PC-3 (cell line): ENCODE measurements at regions of chr3 and their contacts with region 1.

Region 1: DNA sequence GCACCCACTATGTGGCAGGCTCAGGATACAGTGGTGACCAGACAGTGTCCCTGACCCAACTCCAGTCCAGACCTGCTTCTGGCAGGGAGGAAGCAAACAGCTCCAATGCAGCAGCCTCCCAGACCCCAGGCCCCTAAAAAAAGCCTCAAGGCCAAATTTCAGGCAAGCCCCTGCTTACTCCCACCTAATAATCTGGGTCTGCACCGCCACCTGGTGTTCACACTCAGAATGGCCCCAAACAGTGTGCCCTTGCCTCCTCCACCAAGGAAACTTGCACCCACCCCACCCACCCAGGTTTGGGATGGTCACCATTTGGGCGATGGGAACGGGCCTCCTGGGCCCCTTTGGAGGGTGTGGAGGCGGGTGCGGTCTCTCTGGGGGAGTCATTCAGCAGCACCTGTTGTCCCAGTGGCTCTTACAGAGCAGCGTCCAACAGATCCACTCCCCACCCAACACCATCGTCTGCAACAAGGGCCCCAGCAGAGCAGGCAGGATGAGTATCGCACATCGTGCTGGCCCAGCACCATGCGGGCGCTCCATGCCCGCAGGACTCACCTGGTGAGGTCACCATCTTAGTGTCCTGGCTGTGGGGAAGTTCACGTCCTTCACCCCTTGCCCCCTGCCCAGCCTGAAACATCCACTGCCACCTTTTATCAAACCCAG is 17.3 kb downstream of the C3orf18 start:
- DNase-seq: peak; percentile 71
- ATAC-seq: peak; percentile 64
- H3K4me3 ChIP-seq: no peak overlapping the region
- H3K27ac ChIP-seq: no peak overlapping the region
- H3K4me1 ChIP-seq: no peaks in the 10 kb centered on the region
- H3K27me3 ChIP-seq: no peaks in the 10 kb centered on the region
- CTCF ChIP-seq: peak; percentile 63

Region 2: GRCh38 chr3:50205414-50206276 is 344.6 kb before region 1 on chr3:
- CTCF ChIA-PET with region 1: no interaction called
- POLR2A ChIA-PET with region 1: no interaction called
- intact Hi-C with region 1: no loop called
- DNase-seq: no peak
- ATAC-seq: peak; percentile 7; the same call in 1 of the 2 replicates
- H3K4me3 ChIP-seq: peak overlapping the region; percentile 55
- H3K27ac ChIP-seq: no peak overlapping the region
- H3K4me1 ChIP-seq: no peaks in the 10 kb centered on the region
- H3K27me3 ChIP-seq: 0 out of 2 replicates have a peak, but pooled peaks cover 10% of the 10 kb centered on the region
- CTCF ChIP-seq: no peak

Region 3: GRCh38 chr3:50436114-50436674 is 114.0 kb before region 1 on chr3:
- CTCF ChIA-PET with region 1: no interaction called
- POLR2A ChIA-PET with region 1: no interaction called
- intact Hi-C with region 1: loop called (anchors 1 kb)
- DNase-seq: peak; percentile 77
- ATAC-seq: peak; percentile 89
- H3K4me3 ChIP-seq: no peak overlapping the region
- H3K27ac ChIP-seq: no peak overlapping the region
- H3K4me1 ChIP-seq: no peaks in the 10 kb centered on the region
- H3K27me3 ChIP-seq: no peaks in the 10 kb centered on the region
- CTCF ChIP-seq: peak; percentile 95